ENCODE measurements at regions of chr12 and their contacts with region 1.

Region 1: DNA sequence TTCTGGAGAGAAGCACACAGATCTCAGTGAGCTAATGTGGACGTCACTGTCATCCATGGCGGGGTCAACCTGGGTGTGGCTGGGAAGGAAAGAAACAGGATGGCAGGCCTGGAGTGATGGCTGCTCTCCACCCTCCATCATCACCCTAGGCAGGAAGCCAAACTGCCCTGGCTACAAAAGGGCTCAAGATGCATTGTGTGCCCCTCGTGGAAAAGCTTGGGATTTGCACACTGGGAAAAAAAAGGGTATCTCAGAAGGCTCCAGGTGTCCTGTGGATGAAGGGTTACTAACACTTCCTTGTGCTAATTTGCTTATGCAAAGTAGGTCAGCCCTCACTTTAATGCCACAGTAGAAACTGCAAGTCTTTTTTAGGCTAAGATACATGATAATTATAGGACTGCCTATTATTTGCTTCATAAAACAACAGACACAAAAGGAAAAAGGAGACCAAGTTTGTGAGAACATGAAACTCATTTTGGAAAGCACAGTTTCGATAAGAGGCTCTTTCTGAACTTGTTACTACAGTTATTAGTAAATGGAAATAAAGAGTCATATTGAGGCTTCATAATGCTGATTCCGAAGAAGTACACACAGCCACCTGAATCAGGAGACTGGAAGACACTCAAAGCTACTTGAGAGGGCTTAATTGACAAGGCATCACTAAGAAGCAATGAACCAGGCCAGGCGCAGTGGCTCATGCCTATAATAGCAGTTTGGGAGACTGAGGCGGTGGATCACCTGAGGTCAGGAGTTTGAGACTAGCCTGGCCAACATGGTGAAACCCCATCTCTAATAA is 18.9 kb downstream of the RFC5 start:
- DNase-seq: no peak
- H3K4me3 ChIP-seq: no peak overlapping the region
- H3K27ac ChIP-seq: no peak overlapping the region
- H3K4me1 ChIP-seq: no peaks in the 10 kb centered on the region
- H3K27me3 ChIP-seq: no peaks in the 10 kb centered on the region

Region 2: GRCh38 chr12:117874842-117875434 is 160.5 kb before region 1 on chr12:
- CTCF ChIA-PET with region 1: interaction called, 14 read pairs
- POLR2A ChIA-PET with region 1: no interaction called
- DNase-seq: peak; percentile 50 to 71 (median 69)
- H3K4me3 ChIP-seq: no peak overlapping the region
- H3K27ac ChIP-seq: no peak overlapping the region
- H3K4me1 ChIP-seq: peaks cover 0 to 4% (median 1%) of the 10 kb centered on the region in 4 experiments
- H3K27me3 ChIP-seq: peaks cover 0 to 35% (median 10%) of the 10 kb centered on the region in 5 experiments